ENCODE measurements at regions of chr7 and their contacts with region 1.

Region 1: DNA sequence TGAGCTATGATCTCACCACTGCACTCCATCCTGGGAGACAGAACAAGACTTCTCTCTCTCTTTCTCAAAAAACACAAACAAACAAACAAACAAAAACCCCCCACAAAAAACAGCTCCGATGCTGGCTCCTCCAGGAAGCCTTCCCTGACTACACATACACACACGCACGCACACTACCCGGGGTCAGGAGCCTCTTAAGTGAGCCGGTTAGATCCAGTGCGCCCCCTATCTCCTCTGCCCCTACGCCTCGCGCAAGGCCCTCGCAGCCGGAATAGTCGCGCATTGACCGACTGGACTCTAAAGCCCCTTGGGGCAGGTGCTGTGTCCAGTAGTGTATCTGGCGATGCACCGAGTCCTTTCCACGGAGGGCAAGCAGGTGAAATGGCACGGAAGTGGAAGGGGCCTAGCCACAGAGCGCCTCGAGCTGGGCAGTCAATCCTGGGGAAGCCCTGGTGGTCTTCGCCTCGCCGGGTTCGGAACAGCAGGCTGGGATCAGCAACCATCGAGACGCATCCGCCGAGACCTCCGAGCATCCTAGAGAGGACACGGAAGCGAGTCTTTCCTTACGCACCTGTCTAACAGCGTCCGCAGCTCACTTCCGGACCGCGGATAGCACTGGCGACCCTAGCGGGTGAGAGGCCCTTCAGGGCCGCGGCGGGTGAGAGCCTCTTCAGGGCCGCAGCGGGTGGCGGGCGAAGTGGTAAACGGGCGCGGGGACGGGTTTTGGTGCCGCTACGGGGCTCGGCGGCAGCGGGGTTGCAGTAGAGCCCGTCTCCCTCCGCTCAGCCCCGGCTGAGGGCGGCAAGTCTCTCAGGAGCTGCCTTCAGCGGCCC is at the start of gene ZSCAN25:
- DNase-seq: peak; percentile 95 to 96
- H3K4me3 ChIP-seq: peak within 1 kb of the TSS; percentile 69
- H3K4me3 Mint-ChIP-seq: peak within 1 kb of the TSS; percentile 94
- H3K27ac Mint-ChIP-seq: peak within 1 kb of the TSS; percentile 97
- H3K4me1 ChIP-seq: no peaks in the 10 kb centered on the region; the same call in 1 of the 2 replicates
- H3K4me1 Mint-ChIP-seq: peaks cover 21% of the 10 kb centered on the region
- H3K27me3 ChIP-seq: no peaks in the 10 kb centered on the region
- H3K27me3 Mint-ChIP-seq: no peaks in the 10 kb centered on the region
- CTCF ChIP-seq: peak; percentile 35 to 76
- total RNA-seq, gene ZSCAN25: 21.2 and 22.3 TPM in 2 replicates

Region 2: DNA sequence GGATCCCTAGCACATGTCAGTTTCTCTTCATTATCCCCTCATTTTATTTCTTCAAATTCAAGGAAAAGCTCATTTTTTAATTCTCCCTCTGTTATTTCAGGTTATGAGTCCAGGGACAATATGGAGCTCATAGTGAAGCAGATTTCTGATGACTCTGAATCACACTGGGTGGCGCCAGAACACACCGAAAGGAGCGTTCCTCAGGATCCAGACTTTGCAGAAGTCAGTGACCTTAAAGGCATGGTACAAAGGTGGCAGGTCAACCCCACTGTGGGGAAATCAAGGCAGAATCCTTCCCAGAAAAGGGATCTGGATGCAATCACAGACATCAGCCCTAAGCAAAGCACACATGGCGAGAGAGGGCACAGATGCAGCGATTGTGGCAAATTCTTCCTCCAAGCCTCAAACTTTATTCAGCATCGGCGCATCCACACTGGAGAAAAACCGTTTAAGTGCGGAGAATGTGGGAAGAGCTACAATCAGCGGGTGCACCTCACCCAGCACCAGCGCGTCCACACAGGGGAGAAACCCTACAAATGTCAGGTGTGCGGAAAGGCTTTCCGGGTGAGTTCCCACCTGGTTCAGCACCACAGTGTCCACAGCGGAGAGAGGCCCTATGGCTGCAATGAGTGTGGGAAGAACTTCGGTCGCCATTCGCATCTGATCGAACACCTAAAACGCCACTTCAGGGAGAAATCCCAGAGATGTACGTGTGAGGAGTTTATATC is 90.7 kb before region 1 on chr7:
- CTCF ChIA-PET with region 1: interaction called, 9 read pairs
- POLR2A ChIA-PET with region 1: interaction called, 4 read pairs
- intact Hi-C with region 1: loop called (anchors 1 kb)
- DNase-seq: peak in 1 of 2 experiments; percentile 47
- H3K4me3 ChIP-seq: no peak overlapping the region
- H3K4me3 Mint-ChIP-seq: no peak overlapping the region
- H3K27ac Mint-ChIP-seq: no peak overlapping the region
- H3K4me1 ChIP-seq: no peaks in the 10 kb centered on the region
- H3K4me1 Mint-ChIP-seq: no peaks in the 10 kb centered on the region
- H3K27me3 ChIP-seq: no peaks in the 10 kb centered on the region
- H3K27me3 Mint-ChIP-seq: no peaks in the 10 kb centered on the region
- CTCF ChIP-seq: peak; percentile 29 to 54

Region 3: DNA sequence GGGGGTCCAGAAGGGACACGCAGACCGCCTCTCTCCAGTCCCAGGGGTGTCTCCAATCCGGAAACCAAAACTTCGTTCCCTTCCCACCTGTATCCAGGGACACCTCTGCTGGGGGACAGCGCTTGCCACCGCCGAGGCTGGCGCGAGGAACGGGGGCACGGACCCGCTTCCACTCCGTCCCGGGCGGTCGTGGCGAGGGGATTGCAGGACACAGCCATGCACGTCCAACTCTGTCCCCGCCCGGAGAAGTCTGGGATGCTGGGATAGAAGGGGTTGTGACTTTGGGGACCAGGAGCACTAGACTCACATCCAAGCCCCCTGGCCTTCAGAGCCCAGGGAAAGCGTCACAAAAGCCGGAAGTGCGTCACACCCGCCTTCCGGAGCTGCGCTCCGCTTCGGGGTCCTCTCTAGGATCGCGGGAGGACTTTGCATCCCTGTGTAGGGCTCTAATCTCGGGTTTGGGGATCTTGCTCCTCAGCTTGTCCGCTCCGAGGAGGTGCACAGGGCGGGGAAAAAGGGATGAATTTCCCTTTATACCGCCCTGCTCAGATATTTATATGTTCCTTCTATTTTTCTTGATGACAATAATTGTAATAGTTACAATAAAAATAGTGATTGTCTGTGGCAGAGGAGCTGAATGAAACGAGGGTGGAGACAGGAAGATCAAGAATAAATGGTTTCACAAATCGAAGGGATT is 64.7 kb before region 1 on chr7 and contains the start of gene FAM200A:
- CTCF ChIA-PET with region 1: no interaction called
- POLR2A ChIA-PET with region 1: interaction called, 4 read pairs
- intact Hi-C with region 1: loop called (anchors 1 kb)
- DNase-seq: peak; percentile 85 to 87
- H3K4me3 ChIP-seq: peak within 1 kb of the TSS; percentile 62
- H3K4me3 Mint-ChIP-seq: peak within 1 kb of the TSS; percentile 83
- H3K27ac Mint-ChIP-seq: peak within 1 kb of the TSS; percentile 84
- H3K4me1 ChIP-seq: no peaks in the 10 kb centered on the region
- H3K4me1 Mint-ChIP-seq: peaks cover 7% of the 10 kb centered on the region
- H3K27me3 ChIP-seq: no peaks in the 10 kb centered on the region
- H3K27me3 Mint-ChIP-seq: no peaks in the 10 kb centered on the region
- CTCF ChIP-seq: no peak
- total RNA-seq, gene FAM200A: 5.2 TPM in 2 replicates

Region 4: DNA sequence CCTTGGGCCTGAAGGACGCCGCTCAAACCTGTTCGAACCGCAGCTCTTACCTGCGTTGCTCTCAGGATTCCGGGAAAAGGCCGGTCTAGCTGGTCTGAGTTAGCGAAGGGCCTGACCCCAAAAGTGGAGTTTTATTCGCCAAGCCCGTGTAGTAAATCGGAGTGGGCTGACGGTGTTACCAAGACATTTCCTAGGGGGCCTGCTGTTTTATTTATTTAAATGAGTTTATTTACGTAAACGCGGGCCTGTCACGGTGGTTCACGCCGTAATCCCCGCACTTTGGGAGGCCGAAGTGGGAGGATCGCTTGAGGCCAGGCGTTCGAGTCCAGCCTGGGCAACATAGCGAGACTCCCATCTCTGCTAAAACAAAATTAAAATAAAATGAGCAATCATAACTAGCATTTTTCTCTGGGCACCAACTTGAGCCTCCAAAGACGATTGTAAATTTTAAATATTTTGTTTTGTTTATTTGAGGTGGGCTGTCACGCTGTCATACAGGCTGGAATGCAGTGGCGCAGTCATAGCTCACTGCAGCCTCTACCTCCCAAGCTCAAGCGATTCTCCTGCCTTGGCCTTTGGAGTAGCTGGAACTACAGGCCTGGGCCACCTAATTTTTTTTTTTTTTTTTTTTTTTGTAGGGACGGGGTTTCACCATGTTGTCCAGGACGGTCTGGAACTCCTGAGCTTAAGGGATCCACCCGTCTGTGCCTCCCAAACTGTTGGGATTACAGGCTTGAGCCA is 57.2 kb before region 1 on chr7:
- CTCF ChIA-PET with region 1: no interaction called
- POLR2A ChIA-PET with region 1: interaction called, 16 read pairs
- intact Hi-C with region 1: no loop called
- DNase-seq: no peak
- H3K4me3 ChIP-seq: peak overlapping the region; percentile 66
- H3K4me3 Mint-ChIP-seq: peak overlapping the region; percentile 77
- H3K27ac Mint-ChIP-seq: peak overlapping the region; percentile 62
- H3K4me1 ChIP-seq: peaks cover 34% of the 10 kb centered on the region
- H3K4me1 Mint-ChIP-seq: peaks cover 32% of the 10 kb centered on the region
- H3K27me3 ChIP-seq: no peaks in the 10 kb centered on the region
- H3K27me3 Mint-ChIP-seq: no peaks in the 10 kb centered on the region
- CTCF ChIP-seq: no peak

Measured in Caco-2 (cell line).